ENCODE measurements at regions of chr3 and their contacts with region 1.

Region 1: GRCh38 chr3:192188218-192188835 is 539.0 kb downstream of the FGF12 start:
- DNase-seq: peak; percentile 42 to 59
- H3K4me3 ChIP-seq: no peak overlapping the region
- H3K4me3 Mint-ChIP-seq: no peak overlapping the region
- H3K27ac Mint-ChIP-seq: no peak overlapping the region
- H3K4me1 ChIP-seq: no peaks in the 10 kb centered on the region
- H3K4me1 Mint-ChIP-seq: peaks cover 7% of the 10 kb centered on the region
- H3K27me3 ChIP-seq: no peaks in the 10 kb centered on the region
- H3K27me3 Mint-ChIP-seq: no peaks in the 10 kb centered on the region
- CTCF ChIP-seq: peak; percentile 72

Region 2: GRCh38 chr3:192316548-192316947 is 128.2 kb after region 1 on chr3:
- CTCF ChIA-PET with region 1: no interaction called
- POLR2A ChIA-PET with region 1: no interaction called
- intact Hi-C with region 1: loop called (anchors 10 kb)
- DNase-seq: no peak
- H3K4me3 ChIP-seq: no peak overlapping the region
- H3K4me3 Mint-ChIP-seq: no peak overlapping the region
- H3K27ac Mint-ChIP-seq: no peak overlapping the region
- H3K4me1 ChIP-seq: no peaks in the 10 kb centered on the region
- H3K4me1 Mint-ChIP-seq: no peaks in the 10 kb centered on the region
- H3K27me3 ChIP-seq: no peaks in the 10 kb centered on the region
- H3K27me3 Mint-ChIP-seq: no peaks in the 10 kb centered on the region
- CTCF ChIP-seq: no peak